CD8-positive, alpha-beta T cell (primary cell): ENCODE measurements at regions of chr2 and their contacts with region 1.

Region 1: DNA sequence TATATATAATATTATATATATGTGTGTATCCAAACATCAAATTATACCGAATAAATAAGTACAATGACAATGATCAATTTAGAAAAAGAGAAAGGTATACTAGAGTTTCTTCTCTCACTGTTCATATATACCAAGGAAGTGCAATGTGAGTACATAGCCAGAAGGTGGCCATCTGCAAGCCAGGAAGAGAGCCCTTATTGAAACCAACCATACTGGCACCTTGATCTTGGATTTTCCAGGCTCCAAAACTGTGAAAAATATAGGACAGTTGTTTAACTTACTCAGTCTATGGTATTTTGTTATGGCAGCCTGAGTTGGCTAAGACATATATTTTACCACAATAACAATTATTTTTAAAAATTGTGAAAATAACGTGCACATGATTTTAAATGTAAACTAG is 1490.2 kb upstream of the SLC39A10 start:
- DNase-seq: peak in 3 of 9 experiments; percentile 8 to 25 (median 19)
- ATAC-seq: no peak
- H3K4me3 ChIP-seq: no peak overlapping the region
- H3K4me3 Mint-ChIP-seq: no peak overlapping the region
- H3K27ac ChIP-seq: no peak overlapping the region
- H3K27ac Mint-ChIP-seq: no peak overlapping the region
- H3K4me1 ChIP-seq: no peaks in the 10 kb centered on the region
- H3K4me1 Mint-ChIP-seq: no peaks in the 10 kb centered on the region
- H3K27me3 ChIP-seq: no peaks in the 10 kb centered on the region
- H3K27me3 Mint-ChIP-seq: no peaks in the 10 kb centered on the region
- CTCF ChIP-seq: no peak

Region 2: GRCh38 chr2:194155431-194155830 is 11.4 kb before region 1 on chr2:
- CTCF ChIA-PET with region 1: no interaction called
- POLR2A ChIA-PET with region 1: no interaction called
- intact Hi-C with region 1: no loop called
- DNase-seq: no peak
- ATAC-seq: no peak
- H3K4me3 ChIP-seq: no peak overlapping the region
- H3K4me3 Mint-ChIP-seq: no peak overlapping the region
- H3K27ac ChIP-seq: no peak overlapping the region
- H3K27ac Mint-ChIP-seq: no peak overlapping the region
- H3K4me1 ChIP-seq: no peaks in the 10 kb centered on the region
- H3K4me1 Mint-ChIP-seq: no peaks in the 10 kb centered on the region
- H3K27me3 ChIP-seq: no peaks in the 10 kb centered on the region
- H3K27me3 Mint-ChIP-seq: no peaks in the 10 kb centered on the region
- CTCF ChIP-seq: no peak

Region 3: DNA sequence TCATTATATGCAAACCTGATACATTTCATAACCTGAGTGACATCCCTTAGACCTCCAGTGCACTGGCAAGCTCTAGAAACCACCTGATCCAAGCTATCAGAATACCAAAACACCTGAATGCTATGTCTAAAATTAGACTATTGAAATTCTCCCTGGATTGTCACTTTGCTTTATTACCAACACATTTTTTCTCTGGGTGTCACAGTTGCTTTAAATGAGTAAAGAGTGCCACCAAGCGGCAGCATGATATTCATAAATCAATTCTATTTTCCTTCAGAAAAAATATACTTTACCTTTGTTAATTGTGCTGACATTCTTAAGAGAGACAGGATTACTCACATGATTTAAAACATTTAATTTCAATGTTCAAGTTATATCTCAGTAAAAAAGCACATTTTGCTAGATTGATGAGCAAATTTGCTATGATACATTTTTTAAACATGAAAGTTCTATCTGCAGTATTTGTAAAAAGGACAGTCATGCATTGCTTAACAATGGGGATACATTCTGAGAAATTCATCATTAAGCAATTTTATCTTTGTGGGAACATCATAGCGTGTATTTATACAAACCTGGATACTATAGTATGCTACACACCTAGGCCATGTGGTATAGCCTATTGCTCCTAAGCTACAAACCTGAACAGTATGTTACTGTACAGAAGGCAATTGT is 1151.8 kb after region 1 on chr2:
- CTCF ChIA-PET with region 1: no interaction called
- POLR2A ChIA-PET with region 1: no interaction called
- intact Hi-C with region 1: loop called (anchors 2 to 5 kb)
- DNase-seq: peak in 7 of 9 experiments; percentile 1 to 64 (median 41)
- ATAC-seq: no peak
- H3K4me3 ChIP-seq: no peak overlapping the region
- H3K4me3 Mint-ChIP-seq: no peak overlapping the region
- H3K27ac ChIP-seq: no peak overlapping the region
- H3K27ac Mint-ChIP-seq: no peak overlapping the region
- H3K4me1 ChIP-seq: peaks cover 4% of the 10 kb centered on the region
- H3K4me1 Mint-ChIP-seq: peaks cover 8% of the 10 kb centered on the region
- H3K27me3 ChIP-seq: no peaks in the 10 kb centered on the region
- H3K27me3 Mint-ChIP-seq: no peaks in the 10 kb centered on the region
- CTCF ChIP-seq: peak; percentile 83

Region 4: DNA sequence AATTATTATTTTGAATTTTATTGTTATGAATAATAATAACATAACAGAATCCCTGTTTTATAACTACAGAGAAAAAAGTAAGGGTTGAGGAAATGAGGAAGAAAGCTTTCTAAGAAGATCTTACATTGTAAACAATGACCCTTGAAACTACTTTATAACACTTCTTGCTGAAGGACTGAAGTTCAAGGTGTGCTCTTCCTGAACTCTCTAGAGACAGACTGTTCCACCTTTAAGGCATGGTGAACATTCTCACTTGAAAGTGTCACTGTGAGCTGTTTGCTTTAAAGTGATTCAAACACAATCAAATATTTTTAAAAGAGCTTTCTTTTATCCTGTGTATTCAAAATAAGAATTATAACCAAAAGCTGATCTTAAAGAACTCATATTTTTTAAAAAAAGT is 1770.4 kb after region 1 on chr2:
- CTCF ChIA-PET with region 1: no interaction called
- POLR2A ChIA-PET with region 1: no interaction called
- intact Hi-C with region 1: loop called (anchors 5 kb)
- DNase-seq: no peak
- ATAC-seq: no peak
- H3K4me3 ChIP-seq: no peak overlapping the region
- H3K4me3 Mint-ChIP-seq: no peak overlapping the region
- H3K27ac ChIP-seq: no peak overlapping the region
- H3K27ac Mint-ChIP-seq: no peak overlapping the region
- H3K4me1 ChIP-seq: no peaks in the 10 kb centered on the region
- H3K4me1 Mint-ChIP-seq: no peaks in the 10 kb centered on the region
- H3K27me3 ChIP-seq: no peaks in the 10 kb centered on the region
- H3K27me3 Mint-ChIP-seq: no peaks in the 10 kb centered on the region
- CTCF ChIP-seq: no peak